Mucosa of descending colon (tissue), 3 donors: ENCODE measurements at regions of chr19 and their contacts with region 1.

Region 1: GRCh38 chr19:56076498-56076897 is 44.6 kb downstream of the ZNF787 start:
- DNase-seq: peak in 2 of 3 donors; percentile 59 to 83
- ATAC-seq: peak; percentile 75
- H3K4me3 ChIP-seq: no peak overlapping the region
- H3K4me1 ChIP-seq: peaks cover 8% of the 10 kb centered on the region
- CTCF ChIP-seq: peak; percentile 68

Region 2: DNA sequence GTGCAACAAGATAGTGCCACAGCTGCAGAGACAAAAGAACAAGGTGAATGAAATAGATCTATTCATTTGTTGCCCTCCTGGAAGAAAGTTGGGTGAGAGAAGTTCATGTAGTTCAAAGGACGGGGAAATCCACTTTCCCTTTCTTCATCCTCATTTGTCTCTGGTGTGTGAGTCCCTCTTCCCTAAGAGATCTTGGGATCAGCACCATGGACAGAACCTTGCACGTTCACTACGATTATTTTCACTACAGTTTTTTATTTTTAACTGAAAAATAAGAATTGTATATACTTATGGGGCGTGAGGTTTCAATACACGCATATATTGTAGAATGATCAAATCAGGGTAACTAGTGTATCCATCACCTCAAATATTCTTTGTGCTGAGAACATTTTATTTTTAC is 60.7 kb before region 1 on chr19:
- intact Hi-C with region 1: no loop called
- DNase-seq: peak in 1 of 3 donors; percentile 5
- ATAC-seq: no peak
- H3K4me3 ChIP-seq: no peak overlapping the region
- H3K4me1 ChIP-seq: no peaks in the 10 kb centered on the region
- CTCF ChIP-seq: no peak

Region 3: DNA sequence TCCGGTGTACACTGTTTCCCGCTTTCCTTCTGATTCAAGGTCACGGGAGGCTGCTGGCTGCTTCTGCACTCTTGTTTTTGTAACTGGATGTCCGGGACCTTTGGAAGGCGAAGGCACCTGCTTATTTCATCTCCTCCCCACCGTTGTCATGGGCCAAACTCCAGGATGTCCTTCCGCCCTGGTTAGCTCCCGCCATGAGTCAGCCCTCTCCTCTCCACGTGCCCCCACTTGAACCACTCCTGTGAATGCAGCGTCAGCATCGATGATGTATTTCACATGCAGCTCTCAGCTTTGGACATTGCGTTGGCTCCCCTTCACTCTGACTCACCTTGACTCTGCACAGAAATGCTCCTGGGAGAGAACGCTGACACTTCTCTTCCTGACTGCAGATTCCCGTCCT is 93.8 kb after region 1 on chr19:
- intact Hi-C with region 1: loop called in 1 of 2 experiments (anchors 10 kb)
- DNase-seq: no peak
- ATAC-seq: no peak
- H3K4me3 ChIP-seq: no peak overlapping the region
- H3K4me1 ChIP-seq: no peaks in the 10 kb centered on the region
- CTCF ChIP-seq: no peak

Region 4: DNA sequence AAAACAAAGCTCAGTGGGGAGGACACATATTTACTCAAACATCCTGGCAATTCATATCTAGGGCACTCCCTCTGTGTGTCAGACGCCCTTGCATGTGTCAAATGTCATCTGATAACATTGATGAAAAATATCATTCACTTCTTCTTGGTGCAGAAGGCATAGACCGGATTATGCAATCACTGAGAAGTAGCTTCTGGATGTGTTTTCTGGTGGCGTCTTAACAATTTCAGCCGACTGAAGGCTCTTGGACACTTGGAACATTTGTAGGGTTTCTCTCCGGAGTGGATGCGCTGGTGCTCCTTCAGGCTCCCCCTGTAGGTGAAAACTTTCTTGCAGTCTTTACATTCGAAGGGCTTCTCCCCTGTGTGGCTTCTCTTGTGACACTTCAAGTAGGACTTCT is 144.9 kb after region 1 on chr19:
- intact Hi-C with region 1: no loop called
- DNase-seq: peak in 1 of 3 donors; percentile 16
- ATAC-seq: peak; percentile 24
- H3K4me3 ChIP-seq: no peak overlapping the region
- H3K4me1 ChIP-seq: peaks cover 4% of the 10 kb centered on the region
- CTCF ChIP-seq: no peak

Region 5: DNA sequence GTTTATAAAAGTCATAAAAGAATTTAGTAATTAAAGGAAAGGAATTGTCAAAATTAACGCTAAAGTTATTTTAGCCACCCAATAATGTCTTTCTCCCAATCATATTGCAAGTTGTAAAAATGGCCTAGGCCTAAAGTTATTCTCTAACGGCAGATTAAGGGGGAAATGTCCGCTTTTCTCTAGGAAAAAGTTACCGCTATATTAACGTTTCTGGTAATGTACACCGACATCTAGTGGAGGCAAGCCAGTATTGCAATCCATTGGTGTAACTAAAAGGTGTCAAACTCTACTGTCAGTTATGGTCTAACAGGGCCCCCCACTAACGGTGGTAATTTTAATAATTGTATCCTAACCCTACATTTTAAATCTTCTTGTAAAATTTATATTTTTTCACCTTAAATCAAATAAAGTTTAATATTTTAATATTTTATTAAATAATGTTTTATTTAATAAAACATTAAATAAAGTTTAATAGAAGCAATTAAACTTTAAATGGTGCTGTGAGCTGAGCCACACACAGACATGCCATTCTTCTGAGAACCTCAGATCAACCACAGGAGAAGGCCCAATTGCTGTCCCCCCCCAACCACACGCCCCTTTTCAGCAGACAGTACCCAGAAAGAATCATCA is 274.0 kb after region 1 on chr19:
- intact Hi-C with region 1: loop called (anchors 10 kb)
- DNase-seq: peak in 1 of 3 donors; percentile 68
- ATAC-seq: peak; percentile 54
- H3K4me3 ChIP-seq: no peak overlapping the region
- H3K4me1 ChIP-seq: no peaks in the 10 kb centered on the region
- CTCF ChIP-seq: peak; percentile 75